Activated CD4-positive, alpha-beta T cell treated with anti-CD3 and anti-CD28 coated beads, Interleukin-2, amount 10 ng/mL, durations not matched to agents 24 days and 14 days (primary cell): ENCODE measurements at regions of chr11 and their contacts with region 1.

Region 1: GRCh38 chr11:14454861-14455632 is 44.6 kb downstream of the COPB1 start:
- DNase-seq: peak; percentile 59
- H3K4me3 Mint-ChIP-seq: no peak overlapping the region
- H3K27ac Mint-ChIP-seq: no peak overlapping the region
- H3K4me1 Mint-ChIP-seq: peaks cover 3% of the 10 kb centered on the region
- H3K27me3 Mint-ChIP-seq: no peaks in the 10 kb centered on the region

Region 2: DNA sequence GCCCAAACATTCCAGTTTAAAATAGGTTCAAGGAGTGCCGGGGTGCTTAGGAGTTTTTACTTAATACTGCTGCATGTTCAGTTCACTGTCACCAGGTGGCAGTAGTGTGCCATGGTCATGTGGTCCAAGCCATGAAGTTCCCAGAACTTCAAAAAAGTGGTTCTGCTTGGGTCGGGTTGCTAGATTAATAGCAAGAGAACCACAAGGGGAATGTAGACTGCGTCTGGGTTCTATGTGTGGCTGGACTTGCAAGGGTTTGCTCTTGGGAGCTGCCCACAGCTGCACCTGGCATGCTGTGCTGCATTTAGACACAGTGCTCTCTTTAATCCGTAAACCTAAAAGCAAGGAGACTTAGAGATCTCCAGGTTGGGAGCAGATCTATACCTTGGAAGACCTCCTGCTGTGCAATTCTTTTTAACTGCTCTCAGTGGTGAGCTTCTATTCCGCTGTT is 499.1 kb before region 1 on chr11:
- intact Hi-C with region 1: loop called (anchors 5 kb)
- DNase-seq: peak; percentile 84
- H3K4me3 Mint-ChIP-seq: no peak overlapping the region
- H3K27ac Mint-ChIP-seq: no peak overlapping the region
- H3K4me1 Mint-ChIP-seq: no peaks in the 10 kb centered on the region
- H3K27me3 Mint-ChIP-seq: peaks cover 38% of the 10 kb centered on the region

Region 3: DNA sequence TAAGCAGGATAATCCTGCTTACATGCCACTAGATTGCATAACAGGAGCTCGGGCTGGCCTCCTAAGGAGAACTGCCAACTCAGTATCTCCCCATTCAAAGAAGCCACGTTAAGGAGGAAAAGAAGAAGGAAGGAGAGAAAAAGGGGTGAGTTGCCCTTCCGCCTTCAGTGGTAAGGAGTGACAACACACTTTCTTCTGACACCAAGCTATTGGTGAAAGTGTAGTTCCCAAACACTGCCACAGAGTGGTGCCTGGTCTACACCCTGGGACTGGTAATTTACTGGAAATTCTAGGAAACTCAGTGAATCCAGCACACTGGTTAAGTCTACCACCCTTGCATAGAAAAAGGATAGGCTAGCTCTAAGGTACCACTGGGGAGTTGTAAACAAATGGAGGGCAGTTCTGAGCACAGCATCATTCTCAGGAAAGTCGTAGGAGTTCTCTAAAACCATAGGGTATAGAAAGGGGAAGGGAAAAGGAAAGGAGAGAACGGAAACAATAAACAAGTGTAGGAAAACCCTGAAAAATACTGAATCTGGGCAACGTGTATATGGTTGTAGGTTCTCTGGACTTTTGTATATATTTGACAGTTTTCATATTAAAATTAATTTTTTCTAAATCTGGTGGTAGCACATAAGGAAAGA is 154.3 kb before region 1 on chr11:
- intact Hi-C with region 1: loop called (anchors 1 kb)
- DNase-seq: peak; percentile 82
- H3K4me3 Mint-ChIP-seq: no peak overlapping the region
- H3K27ac Mint-ChIP-seq: no peak overlapping the region
- H3K4me1 Mint-ChIP-seq: peaks cover 16% of the 10 kb centered on the region
- H3K27me3 Mint-ChIP-seq: no peaks in the 10 kb centered on the region

Region 4: DNA sequence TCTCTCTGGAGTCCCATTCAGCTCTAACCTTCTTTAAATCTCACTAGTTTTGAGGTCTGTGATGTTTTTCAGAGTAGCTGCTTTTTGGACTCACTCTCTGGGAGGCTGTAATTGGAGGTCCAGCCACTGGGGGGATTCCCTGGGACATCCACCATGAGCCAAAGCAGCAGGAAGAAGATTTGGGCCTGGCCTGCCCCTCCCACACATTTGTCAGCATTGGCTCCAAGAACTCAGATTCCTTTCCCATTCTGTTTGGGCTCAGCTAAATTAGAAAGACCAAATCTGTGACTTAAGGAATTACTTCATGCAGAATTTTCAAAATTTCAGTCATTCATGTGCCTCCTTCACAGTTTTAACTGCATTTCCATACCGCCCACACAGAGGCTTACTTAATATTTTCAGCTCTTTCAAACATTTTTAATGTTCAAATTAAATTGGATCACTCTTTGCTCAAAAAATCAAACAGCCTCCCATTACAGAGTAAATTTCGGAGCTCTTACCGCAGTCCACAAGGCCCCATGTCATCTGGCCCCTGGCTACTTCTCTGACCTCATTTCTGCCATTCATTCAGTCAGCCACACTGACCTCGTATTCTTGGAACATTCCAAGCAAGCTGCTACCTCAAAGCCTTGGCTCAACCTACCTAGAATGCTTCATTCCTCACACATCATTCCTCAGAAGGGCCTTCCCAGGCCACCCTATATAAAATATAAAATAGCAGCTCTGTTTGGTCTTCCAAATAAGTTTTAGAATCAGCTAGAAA is 41.6 kb before region 1 on chr11:
- intact Hi-C with region 1: loop called (anchors 5 kb)
- DNase-seq: no peak
- H3K4me3 Mint-ChIP-seq: no peak overlapping the region
- H3K27ac Mint-ChIP-seq: no peak overlapping the region
- H3K4me1 Mint-ChIP-seq: peaks cover 62% of the 10 kb centered on the region
- H3K27me3 Mint-ChIP-seq: no peaks in the 10 kb centered on the region

Region 5: DNA sequence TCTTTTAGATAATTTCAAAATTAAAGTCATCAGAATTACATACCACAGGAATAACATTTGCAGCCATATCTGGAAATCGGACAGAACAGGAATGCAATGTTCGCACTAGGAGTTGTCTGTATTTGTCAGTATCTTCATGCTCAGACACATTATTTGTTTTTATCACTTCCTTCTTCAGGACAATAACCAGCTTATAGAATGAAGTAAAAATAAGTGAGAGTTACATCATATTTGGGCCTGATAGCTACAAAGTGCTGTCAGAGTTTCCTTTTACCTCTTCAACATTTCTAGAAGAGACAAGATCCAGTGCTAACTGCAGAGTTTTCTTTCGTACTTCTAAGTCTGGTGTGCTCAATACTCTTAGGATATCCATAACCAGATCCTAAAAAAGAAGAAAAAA is 25.7 kb after region 1 on chr11:
- intact Hi-C with region 1: no loop called
- DNase-seq: no peak
- H3K4me3 Mint-ChIP-seq: no peak overlapping the region
- H3K27ac Mint-ChIP-seq: no peak overlapping the region
- H3K4me1 Mint-ChIP-seq: peaks cover 9% of the 10 kb centered on the region
- H3K27me3 Mint-ChIP-seq: no peaks in the 10 kb centered on the region